MCF 10A (cell line): ENCODE measurements at regions of chr11 and their contacts with region 1.

Region 1: GRCh38 chr11:12724301-12725046 is 50.3 kb downstream of the TEAD1 start:
- DNase-seq: peak; percentile 97
- H3K4me3 Mint-ChIP-seq: peak overlapping the region; percentile 63
- H3K27ac Mint-ChIP-seq: peak overlapping the region; percentile 96
- H3K4me1 Mint-ChIP-seq: peaks cover 58% of the 10 kb centered on the region
- H3K27me3 Mint-ChIP-seq: no peaks in the 10 kb centered on the region
- CTCF ChIP-seq: no peak

Region 2: DNA sequence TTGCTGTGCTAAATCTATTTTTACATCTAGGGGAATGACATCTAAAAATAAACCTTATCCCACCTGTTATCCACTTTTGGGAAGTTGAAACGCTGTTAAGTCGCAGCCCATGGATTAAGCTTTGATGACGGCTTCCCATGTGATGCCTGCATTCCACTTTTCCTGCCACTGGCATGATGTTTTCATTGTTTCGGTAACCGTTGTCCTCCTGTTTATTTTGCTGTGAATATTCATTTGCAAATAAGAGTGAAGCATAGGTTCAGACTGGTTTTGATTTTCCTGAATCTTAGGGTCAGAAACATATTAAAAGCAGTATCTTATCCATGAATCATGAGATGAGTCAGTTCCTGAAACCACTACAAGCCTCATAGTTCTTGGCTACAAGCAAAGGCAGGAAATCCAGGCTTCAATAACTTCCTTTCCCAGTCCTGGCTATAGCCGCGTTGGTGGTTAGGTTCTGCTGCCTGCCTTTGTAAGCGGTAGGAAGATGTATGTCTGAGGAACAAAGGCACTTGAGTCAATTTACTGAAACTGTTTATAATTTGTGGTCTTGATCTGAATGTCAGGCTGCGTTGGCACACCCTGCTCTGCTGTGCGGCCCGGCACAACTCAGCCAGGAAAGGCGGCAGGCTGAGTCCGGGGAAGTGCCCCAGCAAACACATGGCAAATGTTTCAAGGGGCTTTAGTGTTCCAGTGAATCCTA is 30.8 kb before region 1 on chr11:
- CTCF ChIA-PET with region 1: no interaction called
- POLR2A ChIA-PET with region 1: interaction called, 21 read pairs
- intact Hi-C with region 1: no loop called
- DNase-seq: peak; percentile 97
- H3K4me3 Mint-ChIP-seq: peak overlapping the region; percentile 62
- H3K27ac Mint-ChIP-seq: peak overlapping the region; percentile 94
- H3K4me1 Mint-ChIP-seq: peaks cover 75% of the 10 kb centered on the region
- H3K27me3 Mint-ChIP-seq: no peaks in the 10 kb centered on the region
- CTCF ChIP-seq: no peak

Region 3: GRCh38 chr11:12706545-12707499 is 17.7 kb before region 1 on chr11:
- CTCF ChIA-PET with region 1: no interaction called
- POLR2A ChIA-PET with region 1: interaction called, 35 read pairs
- intact Hi-C with region 1: no loop called
- DNase-seq: peak; percentile 83
- H3K4me3 Mint-ChIP-seq: peak overlapping the region; percentile 24
- H3K27ac Mint-ChIP-seq: peak overlapping the region; percentile 82
- H3K4me1 Mint-ChIP-seq: peaks cover 70% of the 10 kb centered on the region
- H3K27me3 Mint-ChIP-seq: no peaks in the 10 kb centered on the region
- CTCF ChIP-seq: no peak

Region 4: DNA sequence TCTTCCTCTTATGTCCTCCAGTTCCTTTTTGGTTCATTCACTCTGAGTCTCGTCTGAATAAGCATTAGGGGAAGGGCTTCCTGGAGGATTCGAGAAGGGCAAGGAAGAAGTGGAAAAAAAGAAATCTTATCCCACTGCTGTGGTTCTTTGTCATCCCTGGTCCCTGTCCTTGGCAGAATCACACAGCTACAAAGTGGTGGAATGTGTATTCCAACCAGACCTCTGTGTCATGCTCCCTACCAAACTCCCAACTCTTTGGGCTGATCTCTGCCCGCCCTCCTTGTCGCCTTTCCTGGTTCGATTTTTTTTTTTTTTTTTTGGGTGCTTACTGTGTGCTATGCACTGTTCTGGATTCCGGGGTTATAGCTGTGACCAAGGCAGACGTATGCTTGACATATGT is 10.8 kb after region 1 on chr11:
- CTCF ChIA-PET with region 1: interaction called, 3 read pairs
- POLR2A ChIA-PET with region 1: interaction called, 27 read pairs
- intact Hi-C with region 1: no loop called
- DNase-seq: no peak
- H3K4me3 Mint-ChIP-seq: no peak overlapping the region
- H3K27ac Mint-ChIP-seq: no peak overlapping the region
- H3K4me1 Mint-ChIP-seq: peaks cover 20% of the 10 kb centered on the region
- H3K27me3 Mint-ChIP-seq: no peaks in the 10 kb centered on the region
- CTCF ChIP-seq: no peak

Region 5: DNA sequence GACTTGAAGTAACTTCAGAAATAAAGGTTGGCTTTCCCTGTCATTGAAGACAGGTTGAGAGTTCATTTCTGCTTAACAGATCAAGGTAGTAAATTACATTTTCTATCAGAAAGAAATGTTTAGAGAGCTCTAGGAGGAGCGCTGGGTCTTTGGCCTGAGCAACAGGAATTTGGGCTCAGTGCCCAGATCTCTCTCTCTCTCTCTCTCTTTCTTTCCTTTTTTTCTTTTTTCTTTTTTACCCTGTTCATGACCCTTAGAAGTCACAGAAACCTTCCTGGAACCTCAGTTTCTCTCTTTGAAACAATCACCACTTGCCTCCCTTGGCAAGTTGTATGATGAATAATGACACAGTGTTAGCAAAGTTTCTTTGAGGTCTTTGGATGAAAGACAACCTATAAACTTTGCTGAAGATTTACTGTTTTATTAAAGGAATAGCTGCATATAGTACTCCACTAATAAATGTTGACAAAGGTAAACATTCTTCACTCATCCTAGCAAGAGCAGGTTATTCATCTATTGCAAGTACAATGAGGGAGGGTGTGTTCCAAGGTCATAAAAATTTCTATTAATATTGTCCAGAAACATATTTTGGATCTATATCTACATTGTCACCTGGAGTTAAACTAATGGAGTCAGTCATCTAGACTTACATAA is 249.2 kb after region 1 on chr11:
- CTCF ChIA-PET with region 1: no interaction called
- POLR2A ChIA-PET with region 1: no interaction called
- intact Hi-C with region 1: no loop called
- DNase-seq: no peak
- H3K4me3 Mint-ChIP-seq: no peak overlapping the region
- H3K27ac Mint-ChIP-seq: no peak overlapping the region
- H3K4me1 Mint-ChIP-seq: no peaks in the 10 kb centered on the region
- H3K27me3 Mint-ChIP-seq: no peaks in the 10 kb centered on the region
- CTCF ChIP-seq: no peak